ENCODE measurements at regions of chr20 and their contacts with region 1.

Region 1: GRCh38 chr20:47886460-47887041 is 101.3 kb upstream of the SULF2 start:
- ATAC-seq: peak in 1 of 8 experiments; percentile 85
- H3K4me3 ChIP-seq: no peak overlapping the region
- H3K27ac ChIP-seq: no peak overlapping the region
- H3K4me1 ChIP-seq: peaks cover 4 to 12% of the 10 kb centered on the region in 2 donors

Region 2: DNA sequence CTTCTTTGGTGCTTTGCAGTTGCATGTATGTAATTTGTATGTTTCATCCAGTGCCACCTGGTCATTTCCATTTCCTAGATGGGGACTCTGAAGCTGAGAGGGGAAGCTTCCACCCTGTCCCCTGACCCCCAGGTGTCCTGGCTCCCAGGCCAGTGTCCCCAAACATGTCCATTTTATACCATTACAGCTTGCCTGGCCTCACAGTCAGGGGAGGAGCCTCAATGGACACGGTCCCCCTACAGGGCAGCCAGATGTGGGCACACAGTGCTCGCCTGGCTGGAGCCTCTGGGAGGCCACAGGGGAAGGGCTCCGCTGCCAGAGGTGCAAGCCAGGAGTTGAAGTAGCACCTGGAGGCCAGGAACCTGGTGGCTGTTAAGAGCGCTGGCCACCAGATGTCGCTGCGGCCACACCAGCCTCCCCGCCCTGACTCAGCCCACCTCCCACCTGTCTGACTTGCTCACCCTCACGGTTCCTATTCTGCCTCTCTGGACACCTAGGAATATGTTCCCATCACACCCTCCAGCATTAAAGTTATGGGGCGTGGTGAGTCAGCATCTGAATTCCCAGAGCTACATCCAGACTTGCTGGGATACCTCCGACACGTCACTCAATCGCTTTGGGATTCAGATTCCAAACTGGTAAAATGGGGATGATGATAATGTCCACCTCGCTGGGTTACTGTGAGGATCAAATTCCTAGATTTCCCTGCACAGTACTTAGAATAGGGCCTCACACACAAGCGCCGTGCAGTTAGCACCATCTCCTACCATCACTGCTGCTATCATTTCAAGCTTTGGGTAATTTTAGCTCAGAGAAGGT is 208.7 kb before region 1 on chr20:
- in situ Hi-C with region 1: no loop called
- ATAC-seq: peak in 7 of 8 experiments; percentile 4 to 83 (median 74)
- H3K4me3 ChIP-seq: no peak overlapping the region
- H3K27ac ChIP-seq: no peak overlapping the region
- H3K4me1 ChIP-seq: peaks cover 0 to 2% of the 10 kb centered on the region in 2 donors

Region 3: GRCh38 chr20:47688385-47689381 is 197.9 kb before region 1 on chr20:
- in situ Hi-C with region 1: no loop called
- ATAC-seq: peak in 5 of 8 experiments; percentile 21 to 78 (median 54)
- H3K4me3 ChIP-seq: no peak overlapping the region
- H3K27ac ChIP-seq: no peak overlapping the region
- H3K4me1 ChIP-seq: peaks cover 0 to 5% of the 10 kb centered on the region in 2 donors

Region 4: GRCh38 chr20:47701612-47702011 is 184.9 kb before region 1 on chr20:
- in situ Hi-C with region 1: no loop called
- ATAC-seq: peak in 2 of 8 experiments; percentile 52 to 91
- H3K4me3 ChIP-seq: no peak overlapping the region
- H3K27ac ChIP-seq: no peak overlapping the region
- H3K4me1 ChIP-seq: no peaks in the 10 kb centered on the region

Region 5: DNA sequence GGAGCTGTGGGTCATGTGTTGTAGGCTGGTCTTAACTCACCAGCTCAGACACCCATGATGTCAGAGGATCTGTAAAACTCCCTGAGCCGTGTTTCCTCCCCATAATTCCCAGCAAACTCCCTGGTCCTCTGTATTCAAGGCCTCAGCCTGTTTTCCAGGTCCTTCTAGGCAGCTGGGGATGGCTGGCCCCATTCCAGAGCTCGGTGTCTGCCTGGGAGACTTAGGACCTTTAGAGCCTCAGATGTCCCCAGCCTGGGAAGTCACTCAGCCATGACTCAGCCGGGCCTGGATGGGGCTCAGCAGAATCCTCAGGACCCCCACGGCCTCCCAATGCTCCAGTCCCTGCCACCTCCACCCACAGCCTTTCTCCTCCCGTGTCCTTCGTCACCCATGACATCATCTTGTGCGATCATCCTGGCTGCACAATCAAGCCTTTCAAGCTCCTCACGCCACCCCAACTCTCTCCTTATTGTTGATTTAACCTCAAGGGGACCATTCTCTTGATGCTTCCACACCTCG is 373.8 kb after region 1 on chr20:
- in situ Hi-C with region 1: no loop called
- ATAC-seq: peak in 7 of 8 experiments; percentile 20 to 92 (median 87)
- H3K4me3 ChIP-seq: no peak overlapping the region
- H3K27ac ChIP-seq: peak overlapping the region in 1 of 2 donors; percentile 28
- H3K4me1 ChIP-seq: peaks cover 12 to 32% of the 10 kb centered on the region in 2 donors

Region 6: GRCh38 chr20:48523212-48523941 is 636.8 kb after region 1 on chr20:
- in situ Hi-C with region 1: loop called in 1 of 9 experiments (anchors 10 kb)
- ATAC-seq: peak; percentile 83 to 97 (median 94)
- H3K4me3 ChIP-seq: no peak overlapping the region
- H3K27ac ChIP-seq: peak overlapping the region in 1 of 2 donors; percentile 42
- H3K4me1 ChIP-seq: peaks cover 20 to 21% of the 10 kb centered on the region in 2 donors

Measured in motor neuron (in vitro differentiated cells).